K562 (cell line): ENCODE measurements at regions of chr7 and their contacts with region 1.

Region 1: GRCh38 chr7:87944531-87944930 is 10.5 kb downstream of the ADAM22 start:
- DNase-seq: no peak
- ATAC-seq: no peak
- H3K4me3 ChIP-seq: no peak overlapping the region
- H3K27ac ChIP-seq: no peak overlapping the region
- H3K4me1 ChIP-seq: no peaks in the 10 kb centered on the region
- H3K27me3 ChIP-seq: no peaks in the 10 kb centered on the region; a peak in 1 of 5 replicates
- CTCF ChIP-seq: no peak
- EP300 ChIP-seq: no peak
- POLR2A ChIP-seq: no peak
- RAD21 ChIP-seq: no peak

Region 2: GRCh38 chr7:87779806-87780205 is 164.7 kb before region 1 on chr7:
- CTCF ChIA-PET with region 1: no interaction called
- POLR2A ChIA-PET with region 1: no interaction called
- in situ Hi-C with region 1: no loop called
- intact Hi-C with region 1: loop called (anchors 10 kb)
- DNase-seq: no peak
- ATAC-seq: no peak
- H3K4me3 ChIP-seq: no peak overlapping the region
- H3K27ac ChIP-seq: no peak overlapping the region
- H3K4me1 ChIP-seq: no peaks in the 10 kb centered on the region
- H3K27me3 ChIP-seq: no peaks in the 10 kb centered on the region
- CTCF ChIP-seq: no peak
- EP300 ChIP-seq: no peak
- POLR2A ChIP-seq: no peak
- RAD21 ChIP-seq: no peak

Region 3: DNA sequence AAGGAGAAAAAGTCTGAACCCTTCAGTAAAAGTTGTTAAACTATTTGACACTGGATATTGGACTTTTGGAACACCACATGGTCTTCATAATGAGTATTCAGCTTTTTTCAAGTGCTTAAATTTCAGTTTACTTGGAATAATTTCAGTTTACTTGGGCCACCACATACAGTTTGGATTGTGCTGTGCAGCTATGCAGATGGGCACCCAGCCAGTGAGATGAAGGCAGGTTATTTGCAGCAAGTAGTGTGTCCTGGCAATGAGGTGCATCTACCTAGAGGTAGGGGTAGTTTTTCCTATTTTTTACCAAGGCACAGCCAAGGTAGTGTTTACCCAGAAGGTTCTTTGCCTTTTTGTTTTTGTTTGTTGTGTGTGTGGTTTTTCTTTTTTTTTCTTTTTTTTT is 34.4 kb before region 1 on chr7:
- CTCF ChIA-PET with region 1: no interaction called
- POLR2A ChIA-PET with region 1: no interaction called
- in situ Hi-C with region 1: no loop called
- intact Hi-C with region 1: no loop called
- DNase-seq: no peak
- ATAC-seq: peak; percentile 14; the same call in 1 of the 3 replicates
- H3K4me3 ChIP-seq: no peak overlapping the region
- H3K27ac ChIP-seq: no peak overlapping the region
- H3K4me1 ChIP-seq: no peaks in the 10 kb centered on the region
- H3K27me3 ChIP-seq: no peaks in the 10 kb centered on the region
- CTCF ChIP-seq: no peak
- EP300 ChIP-seq: no peak
- POLR2A ChIP-seq: no peak
- RAD21 ChIP-seq: no peak

Region 4: GRCh38 chr7:88015309-88015708 is 70.8 kb after region 1 on chr7:
- CTCF ChIA-PET with region 1: no interaction called
- POLR2A ChIA-PET with region 1: no interaction called
- in situ Hi-C with region 1: no loop called
- intact Hi-C with region 1: no loop called
- DNase-seq: no peak
- ATAC-seq: no peak
- H3K4me3 ChIP-seq: no peak overlapping the region
- H3K27ac ChIP-seq: no peak overlapping the region
- H3K4me1 ChIP-seq: no peaks in the 10 kb centered on the region
- H3K27me3 ChIP-seq: no peaks in the 10 kb centered on the region; a peak in 1 of 5 replicates
- CTCF ChIP-seq: no peak
- EP300 ChIP-seq: no peak
- POLR2A ChIP-seq: no peak
- RAD21 ChIP-seq: no peak